Lower leg skin (tissue), 4 donors: ENCODE measurements at regions of chr7 and their contacts with region 1.

Region 1: DNA sequence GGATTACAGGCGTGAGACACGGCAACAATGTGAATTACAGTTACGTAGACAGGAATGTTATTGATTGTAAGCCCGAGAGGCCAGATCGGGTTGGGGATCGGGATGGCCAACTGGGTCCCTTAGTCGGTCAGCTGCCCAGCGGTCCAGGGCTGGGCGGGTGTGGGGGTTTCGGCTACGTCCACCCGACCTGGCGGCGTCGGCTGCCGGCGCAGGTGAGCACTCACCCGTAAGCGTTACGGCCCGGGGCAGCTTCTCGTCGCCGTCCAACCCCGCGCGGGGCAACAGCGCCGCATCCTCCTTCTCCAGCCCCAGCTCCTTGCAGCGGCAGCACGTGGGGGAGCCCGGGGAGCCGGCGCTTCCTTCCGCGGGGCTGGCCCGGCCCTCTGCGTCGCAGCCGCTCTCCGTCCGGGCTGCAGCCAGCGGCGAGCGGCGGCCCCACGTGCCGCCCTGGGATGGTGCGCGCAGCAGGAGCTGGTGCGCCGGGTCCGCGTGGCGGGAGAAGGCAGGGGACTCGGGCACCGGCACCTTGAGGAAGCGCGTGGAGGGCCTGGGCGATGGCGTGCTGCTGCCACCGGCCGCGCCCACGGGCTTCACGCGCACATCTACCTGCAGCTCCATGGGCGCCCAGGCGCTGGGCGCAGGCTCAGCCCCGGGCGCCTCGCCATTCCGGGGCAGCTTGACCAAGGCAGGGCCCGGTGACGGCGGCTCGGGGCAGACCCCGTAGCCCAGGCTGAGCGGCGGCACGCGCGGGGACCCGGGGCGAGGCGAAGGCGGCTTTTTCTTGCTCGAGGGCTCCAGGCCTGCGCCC is 607 bp downstream of the KLRG2 start:
- DNase-seq: no peak
- H3K4me3 ChIP-seq: peak overlapping the region; percentile 24
- CTCF ChIP-seq: no peak
- POLR2A ChIP-seq: no peak

Region 2: DNA sequence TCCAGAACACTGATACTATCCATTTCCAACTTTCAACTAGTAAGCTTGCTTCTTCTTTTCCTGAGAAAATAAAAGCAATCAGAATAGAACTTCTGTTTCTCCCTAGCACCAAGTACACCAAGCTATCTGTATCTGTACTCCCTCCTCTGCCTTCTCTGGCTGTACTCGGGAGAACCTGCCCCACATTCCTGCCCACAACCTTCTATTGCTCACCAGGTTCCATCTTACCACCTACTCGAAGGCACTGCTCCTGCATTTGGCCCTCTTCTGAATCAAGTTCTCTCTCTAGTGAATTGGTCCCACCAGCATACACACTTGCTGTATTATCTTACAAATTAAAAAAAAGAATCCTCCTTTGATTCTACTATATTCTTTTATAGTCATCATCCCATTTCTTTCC is 1969.8 kb before region 1 on chr7:
- intact Hi-C with region 1: no loop called
- DNase-seq: no peak
- H3K4me3 ChIP-seq: no peak overlapping the region
- CTCF ChIP-seq: no peak
- POLR2A ChIP-seq: no peak

Region 3: DNA sequence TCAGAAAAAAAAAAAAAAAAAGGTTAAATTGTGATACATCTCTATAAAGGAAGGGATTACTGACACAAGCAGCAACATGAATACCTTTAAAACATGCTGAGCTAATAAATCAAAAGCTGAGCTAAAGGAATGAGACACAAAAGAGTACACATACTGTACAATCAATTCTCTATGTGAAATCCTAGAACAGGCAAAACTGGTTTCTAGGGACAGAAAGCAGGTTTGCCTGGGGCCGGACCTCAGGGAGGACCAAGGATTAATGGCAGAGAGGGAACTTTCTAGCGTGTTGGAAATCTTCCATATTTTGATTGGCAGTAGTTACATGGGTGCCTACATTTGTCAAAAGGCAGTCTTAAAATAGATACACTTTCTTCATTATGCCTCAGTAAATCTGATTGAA is 51.9 kb before region 1 on chr7:
- intact Hi-C with region 1: loop called (anchors 10 kb)
- DNase-seq: no peak
- H3K4me3 ChIP-seq: no peak overlapping the region
- CTCF ChIP-seq: no peak
- POLR2A ChIP-seq: no peak

Region 4: GRCh38 chr7:139452958-139453672 is 29.8 kb before region 1 on chr7:
- intact Hi-C with region 1: no loop called
- DNase-seq: no peak
- H3K4me3 ChIP-seq: no peak overlapping the region
- CTCF ChIP-seq: no peak
- POLR2A ChIP-seq: no peak